HCT116 (cell line): ENCODE measurements at regions of chr19 and their contacts with region 1.

Region 1: DNA sequence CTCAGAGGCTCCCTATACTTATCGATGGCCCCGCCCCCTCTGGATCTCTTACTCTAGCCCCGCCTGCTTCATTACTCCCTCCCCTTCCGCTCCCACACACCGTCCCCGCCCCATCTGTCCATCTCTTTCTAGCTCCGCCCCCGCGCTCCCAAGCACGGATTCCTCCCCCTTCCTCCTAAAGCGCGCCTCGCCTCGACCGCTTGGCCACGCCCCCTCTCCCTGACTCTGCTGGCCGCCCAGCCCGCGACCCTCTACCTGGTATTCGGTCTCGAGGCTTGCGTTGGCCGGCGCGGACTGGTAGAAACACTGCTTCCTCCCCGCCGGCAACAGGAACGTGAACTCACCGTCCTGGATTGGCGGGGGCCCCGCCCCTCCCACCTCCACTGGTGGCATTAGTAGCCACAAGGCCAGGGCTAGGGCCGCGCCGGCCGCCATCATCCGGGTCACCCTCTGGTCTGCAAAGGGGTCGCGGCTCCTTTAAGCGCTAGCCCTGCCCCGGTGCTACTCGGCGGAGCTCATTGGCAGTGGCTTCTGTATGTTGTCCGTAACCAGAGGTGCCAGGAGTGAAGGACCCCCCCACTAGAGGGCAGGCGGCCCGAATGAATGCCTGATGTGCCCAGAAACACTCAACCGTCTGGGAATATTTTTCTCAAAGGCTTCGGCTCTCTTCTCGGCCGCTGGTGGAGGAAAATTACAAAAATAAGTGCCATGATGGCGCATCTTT is at the start of gene TMED1:
- DNase-seq: peak; percentile 99
- ATAC-seq: peak; percentile 87
- H3K4me3 ChIP-seq: peak within 1 kb of the TSS; percentile 72 to 83
- H3K27ac ChIP-seq: peak within 1 kb of the TSS; percentile 94
- H3K4me1 ChIP-seq: peaks cover 10 to 22% of the 10 kb centered on the region in 2 experiments; a peak in 3 of 4 replicates
- H3K27me3 ChIP-seq: no peaks in the 10 kb centered on the region
- CTCF ChIP-seq: peak in 2 of 3 experiments; percentile 25 to 32; a peak in 5 of 6 replicates
- POLR2A ChIP-seq: no peak
- RAD21 ChIP-seq: peak; percentile 34
- total RNA-seq, gene TMED1: 26.3 TPM

Region 2: DNA sequence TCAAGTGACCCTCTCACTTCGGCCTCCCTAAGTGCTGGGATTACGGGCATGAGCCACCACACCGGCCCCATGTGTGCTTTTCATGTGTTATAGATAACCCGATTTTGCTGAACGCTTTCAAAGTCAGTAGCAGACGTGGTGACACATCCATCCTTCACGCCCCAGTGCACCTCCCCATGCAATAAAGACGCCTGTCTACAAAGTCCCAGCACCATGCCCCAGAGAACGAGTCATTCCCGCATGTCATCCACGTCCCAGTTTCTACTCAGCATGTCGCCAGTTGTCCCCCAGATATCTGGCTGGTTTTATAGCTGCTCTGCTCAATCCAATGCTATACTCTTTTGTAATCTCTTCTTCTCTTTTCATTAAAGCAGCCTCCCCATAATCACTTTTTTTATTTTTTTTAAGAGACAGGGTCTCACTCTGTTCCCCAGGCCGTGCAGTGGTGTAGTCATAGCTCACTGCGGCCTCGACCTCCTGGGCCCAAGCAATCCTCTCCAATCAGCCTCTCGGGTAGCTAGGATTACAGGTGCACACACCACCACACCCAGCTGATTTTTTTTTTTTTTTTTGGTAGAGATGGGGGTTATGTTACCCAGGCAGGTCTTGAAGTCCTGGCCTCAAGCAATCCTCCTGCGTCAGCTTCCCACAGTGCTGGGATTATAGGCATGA is 75.5 kb before region 1 on chr19:
- CTCF ChIA-PET with region 1: no interaction called
- POLR2A ChIA-PET with region 1: no interaction called
- RAD21 ChIA-PET with region 1: no interaction called
- intact Hi-C with region 1: no loop called
- DNase-seq: peak; percentile 46
- ATAC-seq: peak; percentile 77
- H3K4me3 ChIP-seq: no peak overlapping the region
- H3K27ac ChIP-seq: peak overlapping the region; percentile 49
- H3K4me1 ChIP-seq: peaks cover 39 to 46% of the 10 kb centered on the region in 2 experiments
- H3K27me3 ChIP-seq: no peaks in the 10 kb centered on the region
- CTCF ChIP-seq: no peak
- POLR2A ChIP-seq: no peak
- RAD21 ChIP-seq: no peak

Region 3: GRCh38 chr19:10780368-10780767 is 55.5 kb before region 1 on chr19:
- CTCF ChIA-PET with region 1: no interaction called
- POLR2A ChIA-PET with region 1: no interaction called
- RAD21 ChIA-PET with region 1: no interaction called
- intact Hi-C with region 1: no loop called
- DNase-seq: no peak
- ATAC-seq: no peak
- H3K4me3 ChIP-seq: no peak overlapping the region
- H3K27ac ChIP-seq: no peak overlapping the region
- H3K4me1 ChIP-seq: no peaks in the 10 kb centered on the region
- H3K27me3 ChIP-seq: no peaks in the 10 kb centered on the region
- CTCF ChIP-seq: no peak
- POLR2A ChIP-seq: no peak
- RAD21 ChIP-seq: no peak

Region 4: GRCh38 chr19:10870955-10871603 is 35.2 kb after region 1 on chr19 and contains the start of gene CARM1:
- CTCF ChIA-PET with region 1: interaction called, 52 read pairs
- POLR2A ChIA-PET with region 1: no interaction called
- RAD21 ChIA-PET with region 1: no interaction called
- intact Hi-C with region 1: no loop called
- DNase-seq: peak; percentile 89
- ATAC-seq: peak; percentile 89
- H3K4me3 ChIP-seq: peak within 1 kb of the TSS; percentile 77 to 86
- H3K27ac ChIP-seq: peak within 1 kb of the TSS; percentile 89
- H3K4me1 ChIP-seq: peaks cover 27 to 35% of the 10 kb centered on the region in 2 experiments
- H3K27me3 ChIP-seq: no peaks in the 10 kb centered on the region
- CTCF ChIP-seq: peak in 2 of 3 experiments; percentile 65 to 69; a peak in 5 of 6 replicates
- POLR2A ChIP-seq: no peak
- RAD21 ChIP-seq: no peak
- total RNA-seq, gene CARM1: 103 TPM